ENCODE measurements at regions of chr7 and their contacts with region 1.

Region 1: GRCh38 chr7:116588641-116589594 is 64.1 kb downstream of the CAV1 start:
- DNase-seq: peak; percentile 64
- H3K4me3 Mint-ChIP-seq: no peak overlapping the region
- H3K27ac Mint-ChIP-seq: peak overlapping the region; percentile 85
- H3K4me1 Mint-ChIP-seq: peaks cover 16% of the 10 kb centered on the region
- H3K27me3 Mint-ChIP-seq: peaks cover 10% of the 10 kb centered on the region
- CTCF ChIP-seq: peak; percentile 57

Region 2: GRCh38 chr7:116173051-116174028 is 415.6 kb before region 1 on chr7:
- CTCF ChIA-PET with region 1: interaction called, 35 read pairs
- POLR2A ChIA-PET with region 1: interaction called, 3 read pairs
- intact Hi-C with region 1: loop called (anchors 1 kb)
- DNase-seq: peak; percentile 65
- H3K4me3 Mint-ChIP-seq: no peak overlapping the region
- H3K27ac Mint-ChIP-seq: no peak overlapping the region
- H3K4me1 Mint-ChIP-seq: peaks cover 23% of the 10 kb centered on the region
- H3K27me3 Mint-ChIP-seq: peaks cover 20% of the 10 kb centered on the region
- CTCF ChIP-seq: peak; percentile 56

Region 3: GRCh38 chr7:116236020-116236630 is 352.8 kb before region 1 on chr7:
- CTCF ChIA-PET with region 1: interaction called, 12 read pairs
- POLR2A ChIA-PET with region 1: interaction called, 4 read pairs
- intact Hi-C with region 1: loop called (anchors 5 kb)
- DNase-seq: peak; percentile 68
- H3K4me3 Mint-ChIP-seq: no peak overlapping the region
- H3K27ac Mint-ChIP-seq: no peak overlapping the region
- H3K4me1 Mint-ChIP-seq: peaks cover 9% of the 10 kb centered on the region
- H3K27me3 Mint-ChIP-seq: no peaks in the 10 kb centered on the region
- CTCF ChIP-seq: peak; percentile 32

Region 4: DNA sequence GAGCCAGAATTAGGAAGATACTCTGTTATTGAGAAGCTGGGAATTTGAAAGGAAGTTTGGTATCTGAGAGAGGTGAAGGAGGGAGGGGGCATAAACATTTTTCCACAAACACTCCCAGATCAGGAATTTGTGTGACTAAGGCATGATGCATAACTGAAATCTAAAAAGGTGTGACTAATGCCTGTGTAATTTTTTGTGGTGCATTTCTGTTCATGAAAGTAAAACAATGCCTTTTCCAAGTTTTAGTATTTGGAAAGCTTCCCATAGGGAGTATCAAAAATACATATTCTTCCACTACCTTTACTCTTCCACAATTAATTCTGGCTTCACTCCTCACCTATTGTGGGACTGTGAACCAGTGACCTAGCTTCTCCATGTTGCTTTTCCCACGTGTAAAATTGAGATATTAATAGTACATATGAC is 145.8 kb before region 1 on chr7:
- CTCF ChIA-PET with region 1: interaction called, 4 read pairs
- POLR2A ChIA-PET with region 1: interaction called, 3 read pairs
- intact Hi-C with region 1: loop called (anchors 5 kb)
- DNase-seq: peak; percentile 93
- H3K4me3 Mint-ChIP-seq: peak overlapping the region; percentile 6
- H3K27ac Mint-ChIP-seq: peak overlapping the region; percentile 93
- H3K4me1 Mint-ChIP-seq: peaks cover 38% of the 10 kb centered on the region
- H3K27me3 Mint-ChIP-seq: no peaks in the 10 kb centered on the region
- CTCF ChIP-seq: no peak

Region 5: DNA sequence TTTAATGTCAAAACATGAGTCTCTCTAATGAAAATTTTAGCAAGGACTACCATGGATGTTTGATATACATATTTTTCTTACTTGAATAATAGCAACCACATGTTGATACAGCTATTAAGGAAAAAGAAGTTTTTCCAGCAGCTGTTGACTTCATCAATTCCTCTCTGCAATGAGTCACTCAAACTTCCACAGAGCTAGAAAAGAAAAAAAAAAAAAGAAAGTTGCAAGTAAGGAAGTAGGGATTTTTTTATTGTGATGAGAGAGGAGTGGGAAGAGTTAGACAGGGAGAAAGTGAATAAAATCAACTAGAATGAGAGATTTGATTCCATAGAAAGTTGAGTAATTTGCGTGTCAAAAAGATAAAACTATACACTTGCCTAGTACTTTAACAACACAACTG is 17.9 kb before region 1 on chr7:
- CTCF ChIA-PET with region 1: interaction called, 33 read pairs
- POLR2A ChIA-PET with region 1: interaction called, 3 read pairs
- intact Hi-C with region 1: no loop called
- DNase-seq: peak; percentile 58
- H3K4me3 Mint-ChIP-seq: peak overlapping the region; percentile 26
- H3K27ac Mint-ChIP-seq: peak overlapping the region; percentile 47
- H3K4me1 Mint-ChIP-seq: peaks cover 42% of the 10 kb centered on the region
- H3K27me3 Mint-ChIP-seq: no peaks in the 10 kb centered on the region
- CTCF ChIP-seq: no peak

Region 6: GRCh38 chr7:116630932-116631745 is 42.2 kb after region 1 on chr7:
- CTCF ChIA-PET with region 1: interaction called, 104 read pairs
- POLR2A ChIA-PET with region 1: interaction called, 37 read pairs
- intact Hi-C with region 1: no loop called
- DNase-seq: peak; percentile 97
- H3K4me3 Mint-ChIP-seq: peak overlapping the region; percentile 62
- H3K27ac Mint-ChIP-seq: peak overlapping the region; percentile 94
- H3K4me1 Mint-ChIP-seq: peaks cover 48% of the 10 kb centered on the region
- H3K27me3 Mint-ChIP-seq: no peaks in the 10 kb centered on the region
- CTCF ChIP-seq: no peak

Region 7: GRCh38 chr7:116809636-116810266 is 220.8 kb after region 1 on chr7:
- CTCF ChIA-PET with region 1: interaction called, 205 read pairs
- POLR2A ChIA-PET with region 1: interaction called, 17 read pairs
- intact Hi-C with region 1: loop called (anchors 1 kb)
- DNase-seq: peak; percentile 77
- H3K4me3 Mint-ChIP-seq: no peak overlapping the region
- H3K27ac Mint-ChIP-seq: peak overlapping the region; percentile 75
- H3K4me1 Mint-ChIP-seq: peaks cover 19% of the 10 kb centered on the region
- H3K27me3 Mint-ChIP-seq: no peaks in the 10 kb centered on the region
- CTCF ChIP-seq: peak; percentile 64